ENCODE measurements at regions of chr5 and their contacts with region 1.

Region 1: GRCh38 chr5:107469485-107470294 is 201.0 kb downstream of the EFNA5 start:
- DNase-seq: no peak
- H3K4me3 ChIP-seq: no peak overlapping the region
- H3K4me3 Mint-ChIP-seq: no peak overlapping the region
- H3K27ac Mint-ChIP-seq: no peak overlapping the region
- H3K4me1 ChIP-seq: peaks cover 15% of the 10 kb centered on the region
- H3K4me1 Mint-ChIP-seq: peaks cover 20% of the 10 kb centered on the region
- H3K27me3 ChIP-seq: no peaks in the 10 kb centered on the region
- H3K27me3 Mint-ChIP-seq: no peaks in the 10 kb centered on the region
- CTCF ChIP-seq: no peak

Region 2: DNA sequence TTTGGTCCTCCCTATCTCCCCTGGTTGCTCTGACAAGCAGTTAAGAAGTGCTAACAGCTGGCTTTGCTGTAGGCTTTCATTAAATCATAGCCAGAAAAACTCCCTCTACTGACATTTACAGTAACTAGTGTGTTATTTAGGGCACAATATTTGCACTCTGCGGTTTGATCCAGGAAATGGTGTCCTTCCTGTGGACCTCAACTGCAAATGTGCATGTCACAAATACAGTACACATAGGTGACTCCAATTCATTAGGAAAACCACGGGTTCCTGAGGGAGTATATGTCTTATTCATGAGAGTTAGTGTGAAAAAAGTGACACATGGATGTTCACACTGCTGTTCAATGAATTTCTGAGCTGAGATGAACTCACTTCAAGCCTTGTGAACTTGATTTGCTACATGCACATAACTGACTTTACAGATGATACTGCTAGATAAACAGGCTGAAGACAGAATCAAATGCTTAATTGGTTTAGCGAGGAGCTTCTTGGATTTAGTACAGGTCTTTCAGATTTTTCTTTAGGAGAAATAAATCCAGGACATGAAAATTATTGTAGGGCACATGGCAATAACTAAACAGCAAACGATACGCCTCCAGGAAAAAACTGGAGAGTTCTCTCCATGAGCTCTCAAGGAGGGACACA is 80.4 kb before region 1 on chr5:
- CTCF ChIA-PET with region 1: no interaction called
- POLR2A ChIA-PET with region 1: no interaction called
- intact Hi-C with region 1: loop called (anchors 2 kb)
- DNase-seq: no peak
- H3K4me3 ChIP-seq: no peak overlapping the region
- H3K4me3 Mint-ChIP-seq: no peak overlapping the region
- H3K27ac Mint-ChIP-seq: no peak overlapping the region
- H3K4me1 ChIP-seq: peaks cover 32% of the 10 kb centered on the region
- H3K4me1 Mint-ChIP-seq: peaks cover 17% of the 10 kb centered on the region
- H3K27me3 ChIP-seq: no peaks in the 10 kb centered on the region
- H3K27me3 Mint-ChIP-seq: no peaks in the 10 kb centered on the region
- CTCF ChIP-seq: no peak

Region 3: GRCh38 chr5:107519900-107520354 is 50.2 kb after region 1 on chr5:
- CTCF ChIA-PET with region 1: no interaction called
- POLR2A ChIA-PET with region 1: no interaction called
- intact Hi-C with region 1: loop called (anchors 5 kb)
- DNase-seq: peak in 1 of 2 experiments; percentile 8
- H3K4me3 ChIP-seq: no peak overlapping the region
- H3K4me3 Mint-ChIP-seq: peak overlapping the region; percentile 8
- H3K27ac Mint-ChIP-seq: no peak overlapping the region
- H3K4me1 ChIP-seq: no peaks in the 10 kb centered on the region
- H3K4me1 Mint-ChIP-seq: peaks cover 10% of the 10 kb centered on the region
- H3K27me3 ChIP-seq: no peaks in the 10 kb centered on the region
- H3K27me3 Mint-ChIP-seq: peaks cover 7% of the 10 kb centered on the region
- CTCF ChIP-seq: no peak